ENCODE measurements at regions of chr1 and their contacts with region 1.

Region 1: DNA sequence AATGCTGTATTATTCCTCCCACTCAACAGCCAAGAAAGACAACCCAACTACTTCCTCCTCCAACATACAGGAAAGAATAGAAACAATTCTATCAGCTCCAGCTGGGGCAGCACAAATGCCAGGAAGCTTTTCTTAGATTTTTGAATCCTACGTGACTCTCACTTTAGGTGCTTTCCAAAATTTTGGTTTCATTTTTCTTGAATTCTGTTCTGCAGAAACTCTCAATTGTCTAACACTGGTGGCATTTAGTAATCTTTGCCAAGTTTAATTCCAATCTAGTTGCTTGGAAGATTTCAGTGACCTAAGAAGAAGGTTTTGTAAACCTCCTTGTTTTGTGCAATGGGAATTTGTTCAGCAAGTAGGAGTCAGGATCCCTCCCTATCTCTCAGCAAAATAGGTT is 37.1 kb upstream of the DOCK7 start:
- DNase-seq: no peak

Region 2: GRCh38 chr1:62654744-62655143 is 70.5 kb before region 1 on chr1:
- intact Hi-C with region 1: no loop called
- DNase-seq: no peak

Region 3: GRCh38 chr1:62687903-62688686 is 37.2 kb before region 1 on chr1 and contains the start of gene DOCK7:
- intact Hi-C with region 1: loop called (anchors 5 kb)
- DNase-seq: peak; percentile 87
- total RNA-seq, gene DOCK7: 12.8 TPM

Region 4: DNA sequence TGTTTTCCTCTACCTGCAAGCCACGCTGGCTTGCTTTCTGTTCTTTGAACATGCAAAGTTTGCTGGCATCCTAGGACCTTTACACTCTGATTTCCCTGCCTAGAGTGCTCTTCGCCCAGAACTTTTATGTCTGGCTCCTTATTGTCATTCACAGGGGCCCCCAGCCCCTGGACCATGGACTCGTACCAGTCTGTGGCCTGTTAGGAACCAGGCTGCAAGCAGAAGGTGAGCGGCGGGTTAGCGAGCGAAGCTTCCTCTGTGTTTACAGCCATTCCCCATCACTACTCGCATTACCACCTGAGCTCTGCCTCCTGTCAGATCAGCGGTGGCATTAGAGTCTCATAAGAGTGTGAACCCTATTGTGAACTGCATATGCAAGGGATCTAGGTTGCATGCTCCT is 131.7 kb after region 1 on chr1:
- intact Hi-C with region 1: no loop called
- DNase-seq: no peak

Measured in cardiac septum (tissue), 1 donor.